Panc1 (cell line): ENCODE measurements at regions of chr9 and their contacts with region 1.

Region 1: DNA sequence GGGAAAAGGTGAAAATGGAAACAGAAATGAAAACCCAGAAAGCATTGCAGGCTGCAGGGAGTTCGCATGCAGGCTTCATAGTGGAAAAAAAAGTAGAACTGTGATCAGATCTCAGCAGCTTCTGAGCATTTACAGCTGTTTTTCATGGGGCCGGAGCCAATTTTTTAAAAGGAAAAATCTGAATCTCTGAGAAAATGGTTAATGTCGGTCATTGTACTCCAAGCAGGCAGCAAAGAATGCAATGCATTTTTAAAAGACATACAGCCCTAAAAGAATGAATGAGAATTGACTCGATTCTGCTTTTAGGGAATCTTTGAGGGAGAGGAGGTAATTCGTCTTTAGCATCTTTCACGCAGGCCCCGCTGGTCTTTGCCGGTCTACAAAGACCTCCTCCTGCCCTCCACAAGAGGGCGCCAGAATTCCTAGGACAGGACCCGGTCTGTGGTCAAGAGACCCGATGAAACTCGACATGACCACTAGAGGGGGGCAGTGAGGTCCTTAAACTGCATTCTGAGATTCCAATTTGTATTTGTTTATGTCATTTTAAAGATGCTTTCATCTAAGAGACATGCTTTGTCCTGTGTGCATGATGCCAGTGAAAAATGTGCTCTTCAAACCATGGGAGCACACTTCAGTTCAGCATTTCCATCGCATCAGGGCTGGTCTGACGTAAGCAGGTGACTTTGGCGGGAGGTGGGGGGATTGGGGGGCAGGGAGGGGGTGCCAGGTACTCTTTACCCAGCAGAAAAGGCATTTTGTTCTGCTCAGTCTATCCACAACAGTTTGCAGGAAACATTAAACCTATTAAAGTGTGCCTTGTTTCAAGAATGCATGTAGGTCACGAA is 43.7 kb upstream of the TMEM252 start:
- DNase-seq: peak; percentile 61
- ATAC-seq: peak; percentile 98
- H3K4me3 ChIP-seq: no peak overlapping the region
- H3K27ac ChIP-seq: no peak overlapping the region
- H3K4me1 ChIP-seq: no peaks in the 10 kb centered on the region
- H3K27me3 ChIP-seq: no peaks in the 10 kb centered on the region
- CTCF ChIP-seq: peak; percentile 96

Region 2: DNA sequence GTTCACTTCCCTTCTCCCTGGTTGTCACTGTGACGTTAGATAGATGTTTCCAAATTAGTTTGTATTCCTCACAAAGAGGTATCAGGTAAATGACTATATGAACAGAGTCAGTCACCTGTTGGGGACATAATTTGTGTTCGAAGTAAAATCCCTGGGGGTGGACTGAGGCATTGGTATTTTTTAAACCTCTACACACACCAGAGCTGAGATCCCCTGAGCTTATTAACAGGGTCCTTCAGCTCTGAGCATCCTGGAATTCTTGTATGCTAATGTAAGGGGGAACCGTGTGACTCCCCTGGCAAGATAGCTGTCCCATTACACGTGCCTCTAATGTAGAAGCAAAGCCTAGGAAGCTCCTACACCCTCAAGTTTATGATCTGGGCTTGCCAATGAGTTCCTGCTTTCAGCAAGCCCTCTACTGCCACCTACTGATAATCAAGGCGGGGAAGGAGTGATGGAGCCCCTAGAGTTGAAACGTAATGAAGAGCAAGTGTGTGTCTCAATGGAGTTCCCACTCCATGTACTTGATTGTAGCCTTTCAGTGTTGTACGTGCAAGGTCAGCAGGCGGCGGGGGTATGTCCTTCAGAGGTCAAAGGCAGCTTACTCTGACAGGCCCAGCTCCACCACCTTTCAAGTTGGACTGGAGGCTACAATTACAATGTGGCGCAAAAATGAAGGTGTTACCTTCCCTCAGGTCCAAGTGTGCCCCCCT is 415.1 kb after region 1 on chr9:
- CTCF ChIA-PET with region 1: no interaction called
- POLR2A ChIA-PET with region 1: no interaction called
- in situ Hi-C with region 1: no loop called
- intact Hi-C with region 1: loop called (anchors 1 kb)
- DNase-seq: peak; percentile 58
- ATAC-seq: peak; percentile 88
- H3K4me3 ChIP-seq: no peak overlapping the region
- H3K27ac ChIP-seq: no peak overlapping the region
- H3K4me1 ChIP-seq: no peaks in the 10 kb centered on the region
- H3K27me3 ChIP-seq: no peaks in the 10 kb centered on the region
- CTCF ChIP-seq: peak; percentile 77